Colonic mucosa (tissue), 4 donors: ENCODE measurements at regions of chr3 and their contacts with region 1.

Region 1: GRCh38 chr3:132352541-132353143 is 35.4 kb downstream of the ACP3 start:
- DNase-seq: peak; percentile 69
- H3K4me3 ChIP-seq: no peak overlapping the region
- H3K27ac ChIP-seq: no peak overlapping the region
- H3K4me1 ChIP-seq: no peaks in the 10 kb centered on the region
- H3K27me3 ChIP-seq: no peaks in the 10 kb centered on the region
- CTCF ChIP-seq: peak; percentile 87

Region 2: GRCh38 chr3:132399054-132399929 is 46.6 kb after region 1 on chr3:
- intact Hi-C with region 1: loop called (anchors 2 kb)
- DNase-seq: no peak
- H3K4me3 ChIP-seq: no peak overlapping the region
- H3K27ac ChIP-seq: no peak overlapping the region
- H3K4me1 ChIP-seq: no peaks in the 10 kb centered on the region
- H3K27me3 ChIP-seq: no peaks in the 10 kb centered on the region
- CTCF ChIP-seq: peak; percentile 63

Region 3: GRCh38 chr3:132641837-132642538 is 289.3 kb after region 1 on chr3:
- intact Hi-C with region 1: loop called (anchors 10 kb)
- DNase-seq: no peak
- H3K4me3 ChIP-seq: no peak overlapping the region
- H3K27ac ChIP-seq: no peak overlapping the region
- H3K4me1 ChIP-seq: no peaks in the 10 kb centered on the region
- H3K27me3 ChIP-seq: no peaks in the 10 kb centered on the region
- CTCF ChIP-seq: peak; percentile 78

Region 4: GRCh38 chr3:132682201-132682600 is 329.6 kb after region 1 on chr3:
- intact Hi-C with region 1: no loop called
- DNase-seq: no peak
- H3K4me3 ChIP-seq: no peak overlapping the region
- H3K27ac ChIP-seq: no peak overlapping the region
- H3K4me1 ChIP-seq: no peaks in the 10 kb centered on the region
- H3K27me3 ChIP-seq: no peaks in the 10 kb centered on the region
- CTCF ChIP-seq: no peak